ENCODE measurements at regions of chr7 and their contacts with region 1.

Region 1: GRCh38 chr7:91034459-91035368 is 229.5 kb upstream of the FZD1 start:
- DNase-seq: peak; percentile 24
- ATAC-seq: peak; percentile 76 to 81

Region 2: GRCh38 chr7:90453259-90453891 is 581.3 kb before region 1 on chr7:
- intact Hi-C with region 1: loop called in 1 of 2 experiments (anchors 5 kb)
- DNase-seq: no peak
- ATAC-seq: no peak

Region 3: GRCh38 chr7:90459888-90460287 is 574.8 kb before region 1 on chr7:
- intact Hi-C with region 1: loop called in 1 of 2 experiments (anchors 10 kb)
- DNase-seq: no peak
- ATAC-seq: no peak

Region 4: GRCh38 chr7:90552521-90552920 is 482.2 kb before region 1 on chr7:
- intact Hi-C with region 1: loop called (anchors 5 kb)
- DNase-seq: no peak
- ATAC-seq: peak in 1 of 2 donors; percentile 43

Region 5: DNA sequence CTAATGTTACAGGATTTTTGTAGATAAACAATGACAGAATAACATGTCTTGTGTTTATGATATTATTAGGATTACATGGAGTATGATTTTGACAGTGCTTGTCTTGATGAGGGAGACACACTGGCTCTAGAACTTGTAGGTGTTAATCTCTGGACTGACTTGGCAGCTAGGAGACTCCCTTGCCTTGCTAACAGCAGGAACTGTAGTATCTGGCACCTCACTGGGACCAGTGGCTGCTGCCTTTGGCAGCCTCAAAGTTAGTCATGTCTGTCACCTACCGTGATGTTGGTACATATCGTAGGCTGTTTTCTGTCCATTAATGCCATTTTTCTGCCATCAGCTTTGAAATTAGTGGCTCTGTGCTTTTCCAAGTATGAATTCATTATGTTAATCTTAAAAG is 177.1 kb before region 1 on chr7:
- intact Hi-C with region 1: loop called in 1 of 2 experiments (anchors 10 kb)
- DNase-seq: peak; percentile 27
- ATAC-seq: peak; percentile 86 to 91